ENCODE measurements at regions of chr10 and their contacts with region 1.

Region 1: DNA sequence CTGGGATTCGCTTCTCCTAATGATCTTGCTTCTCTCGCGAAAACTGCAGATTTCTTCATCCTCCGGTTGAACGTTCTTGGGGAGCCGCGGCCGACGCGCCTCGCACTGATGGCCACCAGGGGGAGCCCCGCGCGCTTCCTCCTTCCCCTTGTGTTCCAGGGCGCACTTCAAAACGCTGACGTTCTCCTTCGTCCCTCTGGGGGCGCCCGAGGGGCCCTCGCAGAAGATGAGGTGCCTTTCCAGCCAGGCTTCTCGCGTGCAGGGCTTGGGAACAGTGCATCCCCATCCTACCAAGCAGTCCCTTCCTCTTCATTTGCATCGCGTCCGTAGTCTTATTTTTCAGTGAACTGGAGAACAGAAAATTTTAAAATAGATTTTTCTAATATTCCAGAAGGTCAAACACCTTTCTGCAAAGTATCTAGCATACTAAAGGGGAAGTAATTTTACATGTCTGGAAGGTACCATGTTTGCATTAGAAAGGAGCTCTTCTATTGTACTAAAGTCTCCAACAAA is 22.5 kb downstream of the GSTO2 start:
- DNase-seq: peak; percentile 77
- ATAC-seq: peak; percentile 100
- H3K4me3 Mint-ChIP-seq: peak overlapping the region; percentile 61
- H3K27ac Mint-ChIP-seq: no peak overlapping the region
- H3K4me1 Mint-ChIP-seq: peaks cover 6% of the 10 kb centered on the region
- H3K27me3 Mint-ChIP-seq: peaks cover 9% of the 10 kb centered on the region
- CTCF ChIP-seq: peak; percentile 94

Region 2: DNA sequence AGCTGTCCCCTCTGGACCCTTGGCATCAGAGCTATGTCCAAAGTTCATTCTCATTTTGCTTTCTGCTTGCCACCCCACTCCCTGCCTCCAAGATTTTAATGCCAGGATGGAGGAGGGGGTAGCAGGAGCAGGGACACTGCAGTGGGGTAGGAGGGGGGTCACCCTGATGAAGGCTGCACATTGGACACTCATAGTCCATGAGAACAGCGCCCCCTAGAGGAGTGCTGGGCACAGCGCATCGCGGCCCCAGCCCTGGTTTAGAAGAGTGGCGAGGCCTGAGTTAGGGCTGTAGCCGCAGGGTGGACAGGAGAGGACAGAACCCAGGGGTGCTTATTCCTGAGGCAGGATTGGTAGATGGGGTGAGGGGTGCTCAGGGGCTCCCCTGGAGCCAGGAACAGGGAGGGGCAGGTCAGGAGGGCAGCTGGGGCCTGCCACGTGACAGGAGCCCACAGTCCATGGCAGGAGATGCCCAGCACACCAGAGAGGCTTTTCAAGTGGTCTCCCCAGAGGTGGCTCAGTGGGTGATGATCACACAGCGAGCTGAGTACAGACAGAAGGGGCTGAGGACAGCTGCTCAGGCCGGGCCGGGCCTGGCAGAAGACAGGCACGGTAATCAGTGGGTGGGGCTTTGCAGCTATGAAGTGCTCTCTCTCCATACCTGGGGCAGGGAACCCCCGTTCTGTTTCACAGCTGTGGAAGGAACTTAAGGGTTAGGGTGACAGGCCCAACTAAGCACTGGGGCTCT is 726.5 kb before region 1 on chr10:
- CTCF ChIA-PET with region 1: no interaction called
- POLR2A ChIA-PET with region 1: no interaction called
- intact Hi-C with region 1: no loop called
- DNase-seq: no peak
- ATAC-seq: no peak
- H3K4me3 Mint-ChIP-seq: no peak overlapping the region
- H3K27ac Mint-ChIP-seq: no peak overlapping the region
- H3K4me1 Mint-ChIP-seq: peaks cover 2% of the 10 kb centered on the region
- H3K27me3 Mint-ChIP-seq: peaks cover 5% of the 10 kb centered on the region
- CTCF ChIP-seq: no peak

Region 3: GRCh38 chr10:104268716-104269645 is 22.5 kb before region 1 on chr10 and contains the start of gene GSTO2:
- CTCF ChIA-PET with region 1: interaction called, 21 read pairs
- POLR2A ChIA-PET with region 1: interaction called, 6 read pairs
- intact Hi-C with region 1: loop called (anchors 1 kb)
- DNase-seq: peak; percentile 90
- ATAC-seq: peak; percentile 96
- H3K4me3 Mint-ChIP-seq: peak within 1 kb of the TSS; percentile 91
- H3K27ac Mint-ChIP-seq: peak within 1 kb of the TSS; percentile 95
- H3K4me1 Mint-ChIP-seq: peaks cover 41% of the 10 kb centered on the region
- H3K27me3 Mint-ChIP-seq: peaks cover 1% of the 10 kb centered on the region
- CTCF ChIP-seq: no peak
- total RNA-seq, gene GSTO2: 0.56 and 0.91 TPM in 2 replicates

Region 4: DNA sequence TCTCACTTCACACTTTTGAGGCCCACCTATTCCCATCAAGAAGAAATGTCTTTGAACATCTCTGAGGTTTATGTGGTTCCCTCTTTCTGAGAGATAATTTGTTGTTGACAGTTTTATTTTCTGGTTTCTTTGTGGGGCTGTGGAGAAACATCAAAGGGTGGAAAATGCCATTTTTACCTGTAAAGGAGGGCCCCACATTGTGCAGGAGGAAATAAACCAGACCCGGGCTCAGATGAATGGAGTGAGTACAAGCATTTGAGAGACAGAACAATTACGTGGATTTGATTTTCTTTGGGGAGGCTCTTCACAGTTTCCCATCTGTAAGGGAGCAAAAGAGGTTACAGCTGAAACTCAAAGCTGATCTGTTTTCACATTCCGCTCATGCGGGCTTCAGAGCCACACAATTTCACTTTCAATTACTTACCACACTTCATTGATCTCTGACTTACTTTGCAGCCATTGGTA is 17.0 kb after region 1 on chr10:
- CTCF ChIA-PET with region 1: interaction called, 42 read pairs
- POLR2A ChIA-PET with region 1: interaction called, 3 read pairs
- intact Hi-C with region 1: loop called (anchors 1 kb)
- DNase-seq: no peak
- ATAC-seq: peak; percentile 19
- H3K4me3 Mint-ChIP-seq: no peak overlapping the region
- H3K27ac Mint-ChIP-seq: peak overlapping the region; percentile 64
- H3K4me1 Mint-ChIP-seq: peaks cover 23% of the 10 kb centered on the region
- H3K27me3 Mint-ChIP-seq: no peaks in the 10 kb centered on the region
- CTCF ChIP-seq: no peak

Region 5: DNA sequence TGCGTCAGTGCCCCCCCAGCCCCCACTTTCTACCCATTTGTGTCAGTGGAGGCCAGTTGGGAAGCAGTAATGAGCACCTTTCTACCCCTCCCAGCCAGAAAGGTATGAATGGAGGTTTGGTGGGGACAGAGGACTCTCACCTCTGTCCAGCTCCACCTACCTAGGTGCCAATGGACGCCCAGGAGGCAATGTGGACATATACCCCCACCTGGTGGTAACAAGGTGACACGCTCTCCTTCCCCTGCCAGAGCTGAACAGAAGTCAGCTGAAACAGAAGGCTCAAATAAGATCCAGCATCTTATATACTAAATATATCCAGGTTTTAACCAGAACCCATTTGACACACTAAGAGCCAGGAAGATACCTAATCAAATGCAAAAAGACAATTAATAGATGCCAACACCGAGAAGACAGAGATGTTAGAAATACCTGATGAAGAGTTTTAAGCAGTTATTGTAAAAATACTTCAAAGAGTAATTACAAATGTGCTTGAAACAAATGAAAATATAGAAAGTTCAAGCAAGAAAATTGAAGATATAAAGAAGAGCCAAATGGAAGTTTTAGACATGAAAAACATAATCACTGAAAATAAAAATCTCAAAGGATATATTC is 331.2 kb after region 1 on chr10:
- CTCF ChIA-PET with region 1: no interaction called
- POLR2A ChIA-PET with region 1: no interaction called
- intact Hi-C with region 1: loop called (anchors 1 kb)
- DNase-seq: no peak
- ATAC-seq: no peak
- H3K4me3 Mint-ChIP-seq: no peak overlapping the region
- H3K27ac Mint-ChIP-seq: no peak overlapping the region
- H3K4me1 Mint-ChIP-seq: no peaks in the 10 kb centered on the region
- H3K27me3 Mint-ChIP-seq: peaks cover 14% of the 10 kb centered on the region
- CTCF ChIP-seq: no peak

Region 6: DNA sequence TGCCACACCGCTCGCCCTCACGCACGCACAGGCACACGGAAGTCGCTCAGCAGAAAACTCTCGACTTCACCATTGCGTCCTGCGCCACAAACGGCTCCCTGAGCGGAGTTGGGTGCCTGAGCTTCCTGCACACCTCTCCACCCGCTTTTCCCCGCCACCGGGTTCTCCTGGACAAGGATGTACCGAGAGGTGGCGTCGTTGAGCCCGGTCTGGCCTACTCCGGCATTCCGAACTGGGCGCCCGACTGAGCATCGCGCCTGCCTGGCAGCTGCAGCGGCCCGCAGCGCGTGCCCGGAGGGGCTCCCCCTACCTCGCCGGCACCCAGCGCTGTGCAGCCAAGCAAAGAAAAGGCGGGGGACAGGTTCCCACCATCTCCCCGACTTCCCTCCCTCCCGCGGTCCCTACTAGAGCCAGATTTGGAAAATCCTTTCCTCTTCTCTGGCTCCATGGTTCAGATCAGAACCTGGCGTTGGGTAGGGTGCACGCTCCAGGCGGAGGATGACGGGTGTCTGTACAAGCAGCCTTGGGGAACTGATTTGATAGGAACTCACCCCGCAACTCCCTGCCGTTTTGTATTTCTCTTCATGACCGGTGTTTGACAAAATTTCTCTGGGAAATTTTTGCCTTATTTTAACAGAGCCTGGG is 351.3 kb after region 1 on chr10:
- CTCF ChIA-PET with region 1: no interaction called
- POLR2A ChIA-PET with region 1: no interaction called
- intact Hi-C with region 1: no loop called
- DNase-seq: no peak
- ATAC-seq: no peak
- H3K4me3 Mint-ChIP-seq: no peak overlapping the region
- H3K27ac Mint-ChIP-seq: no peak overlapping the region
- H3K4me1 Mint-ChIP-seq: peaks cover 2% of the 10 kb centered on the region
- H3K27me3 Mint-ChIP-seq: peaks cover 58% of the 10 kb centered on the region
- CTCF ChIP-seq: no peak

Region 7: DNA sequence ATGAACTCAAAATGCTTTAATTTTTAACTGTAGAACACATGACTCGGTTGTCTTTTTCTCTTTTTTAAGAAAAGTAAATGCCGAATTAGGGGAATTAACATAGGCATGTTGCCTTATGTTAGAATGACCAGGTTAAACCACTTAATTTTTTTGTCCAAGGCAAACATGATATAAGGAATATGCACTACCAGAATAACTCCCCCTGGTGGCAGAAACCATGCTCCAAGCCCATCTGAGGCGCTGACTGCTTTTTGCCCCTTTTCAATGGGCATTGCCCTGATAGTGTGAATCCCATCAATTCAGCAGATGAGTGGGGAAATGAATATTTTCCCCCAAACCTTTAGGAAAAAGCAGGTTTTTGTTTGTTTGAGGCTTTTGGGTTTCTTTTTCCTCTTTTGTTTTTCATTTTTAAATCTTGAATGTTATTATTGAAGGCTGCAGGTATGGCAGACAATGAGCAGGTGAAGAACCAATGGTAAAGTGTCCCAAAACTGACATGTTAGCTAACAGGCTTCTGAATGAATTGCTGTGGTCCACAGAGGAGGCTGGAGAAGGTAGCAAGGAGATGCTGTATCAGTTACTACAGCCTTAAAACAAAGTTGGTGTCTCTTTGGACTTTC is 633.8 kb after region 1 on chr10:
- CTCF ChIA-PET with region 1: no interaction called
- POLR2A ChIA-PET with region 1: no interaction called
- intact Hi-C with region 1: loop called (anchors 10 kb)
- DNase-seq: no peak
- ATAC-seq: no peak
- H3K4me3 Mint-ChIP-seq: no peak overlapping the region
- H3K27ac Mint-ChIP-seq: no peak overlapping the region
- H3K4me1 Mint-ChIP-seq: peaks cover 2% of the 10 kb centered on the region
- H3K27me3 Mint-ChIP-seq: peaks cover 2% of the 10 kb centered on the region
- CTCF ChIP-seq: no peak